SK-N-SH (cell line): ENCODE measurements at regions of chr1 and their contacts with region 1.

Region 1: GRCh38 chr1:51768971-51769588 is 109.4 kb downstream of the NRDC start:
- DNase-seq: peak; percentile 58
- H3K4me3 ChIP-seq: no peak overlapping the region; a peak in 1 of 4 replicates
- H3K27ac ChIP-seq: no peak overlapping the region
- H3K4me1 ChIP-seq: no peaks in the 10 kb centered on the region
- H3K27me3 ChIP-seq: no peaks in the 10 kb centered on the region
- CTCF ChIP-seq: peak; percentile 93
- EP300 ChIP-seq: no peak
- RAD21 ChIP-seq: peak; percentile 83

Region 2: GRCh38 chr1:51627678-51628077 is 141.4 kb before region 1 on chr1:
- CTCF ChIA-PET with region 1: interaction called, 39 read pairs
- POLR2A ChIA-PET with region 1: no interaction called
- DNase-seq: peak; percentile 38
- H3K4me3 ChIP-seq: no peak overlapping the region
- H3K27ac ChIP-seq: no peak overlapping the region
- H3K4me1 ChIP-seq: peaks cover under 1 to 3% of the 10 kb centered on the region in 2 experiments; a peak in 1 of 4 replicates
- H3K27me3 ChIP-seq: no peaks in the 10 kb centered on the region
- CTCF ChIP-seq: peak; percentile 70
- EP300 ChIP-seq: no peak
- RAD21 ChIP-seq: peak; percentile 85

Region 3: DNA sequence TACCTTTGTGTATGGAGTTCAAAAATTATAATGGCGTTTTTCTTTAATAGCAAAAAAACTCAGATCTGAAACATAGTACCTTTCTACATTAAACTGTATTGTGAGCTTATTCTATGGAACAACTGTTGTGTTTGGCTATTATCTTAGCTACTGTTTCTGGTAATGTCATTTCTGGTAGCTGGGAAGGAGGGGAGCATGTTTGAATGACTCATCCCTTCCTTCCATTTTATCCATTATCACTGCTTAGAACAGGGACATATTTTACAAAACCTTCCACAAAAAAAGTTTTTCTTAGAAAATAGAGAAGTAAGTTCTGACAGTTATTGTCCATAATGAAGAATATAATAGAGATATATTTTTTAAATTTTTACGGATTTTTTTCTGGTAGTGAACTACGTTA is 18.9 kb before region 1 on chr1:
- CTCF ChIA-PET with region 1: interaction called, 12 read pairs
- POLR2A ChIA-PET with region 1: no interaction called
- DNase-seq: no peak
- H3K4me3 ChIP-seq: no peak overlapping the region
- H3K27ac ChIP-seq: peak overlapping the region in 1 of 2 experiments; percentile 19; a peak in 1 of 4 replicates
- H3K4me1 ChIP-seq: peaks cover 0 to 9% of the 10 kb centered on the region in 2 experiments; a peak in 2 of 4 replicates
- H3K27me3 ChIP-seq: no peaks in the 10 kb centered on the region
- CTCF ChIP-seq: no peak
- EP300 ChIP-seq: no peak
- RAD21 ChIP-seq: no peak